Activated naive CD4-positive, alpha-beta T cell treated with anti-CD3 and anti-CD28 coated beads, Interleukin-2, amount 10 ng/mL, durations not matched to agents 7 days and 5 days (primary cell): ENCODE measurements at regions of chr13 and their contacts with region 1.

Region 1: GRCh38 chr13:76473552-76474134 is 412.6 kb downstream of the KCTD12 start:
- DNase-seq: peak; percentile 82
- H3K4me3 Mint-ChIP-seq: no peak overlapping the region
- H3K27ac Mint-ChIP-seq: no peak overlapping the region
- H3K4me1 Mint-ChIP-seq: no peaks in the 10 kb centered on the region
- H3K27me3 Mint-ChIP-seq: peaks cover 7% of the 10 kb centered on the region

Region 2: DNA sequence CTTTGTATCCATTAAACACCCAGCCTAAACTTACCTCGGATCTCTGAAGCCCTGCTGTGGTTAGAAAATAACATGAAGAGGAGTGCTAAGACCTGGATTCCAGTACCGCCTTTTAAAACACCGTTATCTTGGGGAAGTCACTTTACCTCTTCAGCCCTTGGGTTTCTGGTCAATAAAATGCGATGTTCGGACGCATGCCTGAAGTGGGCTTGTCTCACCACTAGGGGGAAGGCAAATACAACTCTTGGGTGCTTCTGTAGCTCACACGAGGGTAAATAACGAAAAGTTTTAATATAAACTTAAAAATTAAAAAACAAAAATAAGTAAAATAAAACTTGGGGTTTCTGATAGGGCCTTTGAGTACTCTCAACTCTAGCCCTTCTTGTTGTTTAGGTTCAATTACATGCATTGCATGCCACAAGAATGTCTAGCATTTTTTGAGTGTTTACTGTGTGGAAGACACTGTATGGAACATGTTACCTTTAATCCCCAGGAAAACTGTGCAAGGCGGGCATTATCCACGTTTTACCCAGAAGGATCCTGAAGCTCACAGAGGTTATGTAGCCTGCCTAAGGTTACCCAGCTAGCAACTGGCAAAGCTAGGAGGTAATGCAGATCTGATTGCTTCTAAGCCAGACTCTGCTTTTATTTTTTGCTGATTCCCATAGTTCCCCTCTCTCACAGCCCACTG is 597.1 kb before region 1 on chr13:
- CTCF ChIA-PET with region 1: interaction called, 25 read pairs
- DNase-seq: peak; percentile 68
- H3K4me3 Mint-ChIP-seq: peak overlapping the region; percentile 33
- H3K27ac Mint-ChIP-seq: peak overlapping the region; percentile 30
- H3K4me1 Mint-ChIP-seq: peaks cover 26% of the 10 kb centered on the region
- H3K27me3 Mint-ChIP-seq: no peaks in the 10 kb centered on the region

Region 3: GRCh38 chr13:76148926-76149325 is 324.7 kb before region 1 on chr13:
- CTCF ChIA-PET with region 1: no interaction called
- DNase-seq: no peak
- H3K4me3 Mint-ChIP-seq: no peak overlapping the region
- H3K27ac Mint-ChIP-seq: no peak overlapping the region
- H3K4me1 Mint-ChIP-seq: no peaks in the 10 kb centered on the region
- H3K27me3 Mint-ChIP-seq: no peaks in the 10 kb centered on the region

Region 4: DNA sequence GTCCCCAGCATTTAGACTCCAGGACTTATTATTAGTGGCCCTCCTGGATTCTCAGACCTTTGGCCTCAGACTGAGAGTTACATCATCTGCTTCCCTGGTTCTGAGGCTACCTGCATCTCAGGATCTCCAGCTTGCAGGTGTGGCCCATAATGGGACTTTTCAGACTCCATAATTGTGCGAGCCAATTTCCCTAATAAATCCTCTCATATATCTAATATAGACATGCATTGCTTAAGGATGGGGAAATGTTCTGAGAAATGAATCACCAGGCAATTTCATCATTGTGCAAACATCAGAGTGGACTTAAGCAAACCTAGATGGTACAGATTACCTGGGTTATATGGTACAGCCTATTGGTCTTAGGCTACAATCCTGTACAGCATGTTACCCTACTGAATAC is 669.8 kb after region 1 on chr13:
- CTCF ChIA-PET with region 1: no interaction called
- DNase-seq: no peak
- H3K4me3 Mint-ChIP-seq: no peak overlapping the region
- H3K27ac Mint-ChIP-seq: no peak overlapping the region
- H3K4me1 Mint-ChIP-seq: no peaks in the 10 kb centered on the region
- H3K27me3 Mint-ChIP-seq: no peaks in the 10 kb centered on the region